ENCODE measurements at regions of chr11 and their contacts with region 1.

Region 1: DNA sequence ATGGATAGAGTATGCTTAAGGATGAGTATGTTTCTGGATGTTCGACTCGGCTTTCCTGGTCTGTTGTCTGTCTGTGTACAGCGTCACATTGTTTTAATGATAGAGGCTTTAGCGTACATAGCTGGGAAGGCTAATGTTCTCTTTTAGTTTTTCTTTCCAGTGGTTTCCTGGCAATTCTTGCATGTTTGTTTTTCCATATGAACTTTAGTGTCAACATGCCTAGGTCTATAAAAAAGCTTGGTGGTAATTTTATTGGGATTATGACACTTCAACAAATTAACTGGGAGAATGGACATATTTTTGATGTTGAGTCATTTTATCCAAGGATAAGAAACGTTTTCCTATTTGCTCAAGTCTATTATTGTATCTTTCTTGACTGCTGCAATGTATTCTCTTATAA is 17.6 kb downstream of the F2 start:
- DNase-seq: no peak
- H3K4me3 ChIP-seq: no peak overlapping the region
- H3K27ac ChIP-seq: no peak overlapping the region
- H3K4me1 ChIP-seq: no peaks in the 10 kb centered on the region
- H3K27me3 ChIP-seq: no peaks in the 10 kb centered on the region
- CTCF ChIP-seq: no peak

Region 2: GRCh38 chr11:46475926-46476545 is 260.6 kb before region 1 on chr11:
- CTCF ChIA-PET with region 1: no interaction called
- dilution Hi-C with region 1: no loop called
- in situ Hi-C with region 1: no loop called
- intact Hi-C with region 1: no loop called
- DNase-seq: no peak
- H3K4me3 ChIP-seq: no peak overlapping the region
- H3K27ac ChIP-seq: no peak overlapping the region
- H3K4me1 ChIP-seq: peaks cover 27% of the 10 kb centered on the region
- H3K27me3 ChIP-seq: no peaks in the 10 kb centered on the region
- CTCF ChIP-seq: no peak

Region 3: GRCh38 chr11:46700241-46701077 is 36.2 kb before region 1 on chr11 and contains the starts of genes ARHGAP1 and ZNF408:
- CTCF ChIA-PET with region 1: no interaction called
- dilution Hi-C with region 1: loop called (anchors 5 kb)
- in situ Hi-C with region 1: no loop called
- intact Hi-C with region 1: no loop called
- DNase-seq: peak; percentile 98
- H3K4me3 ChIP-seq: peak within 1 kb of the TSS; percentile 81 to 97 (median 92)
- H3K27ac ChIP-seq: peak within 1 kb of the TSS; percentile 91
- H3K4me1 ChIP-seq: peaks cover 7% of the 10 kb centered on the region
- H3K27me3 ChIP-seq: no peaks in the 10 kb centered on the region
- CTCF ChIP-seq: no peak
- total RNA-seq, gene ARHGAP1: 57.2 to 123 TPM
- total RNA-seq, gene ZNF408: 12.6 to 15.2 TPM

Measured in mammary epithelial cell (primary cell).